Activated CD4-positive, alpha-beta memory T cell treated with anti-CD3 and anti-CD28 coated beads, Interleukin-2, amount 10 ng/mL, durations not matched to agents 7 days and 5 days (primary cell): ENCODE measurements at regions of chr6 and their contacts with region 1.

Region 1: DNA sequence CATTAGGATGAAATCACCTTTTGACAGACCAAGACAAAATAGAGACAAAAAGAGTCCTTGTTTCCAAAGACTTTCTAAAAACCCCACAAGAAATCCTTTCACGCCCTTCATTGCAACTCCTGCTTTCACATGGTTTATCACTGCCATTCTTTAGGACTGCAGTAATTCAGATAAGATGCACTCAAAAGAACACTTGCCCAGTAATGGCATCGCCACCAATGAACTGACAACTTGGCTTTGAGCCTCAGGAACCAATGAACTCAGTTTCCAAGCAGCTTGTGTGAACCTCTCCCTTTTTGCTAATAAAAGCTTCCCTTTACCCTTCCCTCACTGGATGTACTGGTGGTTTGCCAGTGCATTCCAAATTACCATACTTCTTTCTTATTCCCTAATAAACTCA is 21.8 kb downstream of the OSTM1 start:
- DNase-seq: no peak
- H3K4me3 Mint-ChIP-seq: no peak overlapping the region
- H3K27ac Mint-ChIP-seq: no peak overlapping the region
- H3K4me1 Mint-ChIP-seq: no peaks in the 10 kb centered on the region
- H3K27me3 Mint-ChIP-seq: no peaks in the 10 kb centered on the region

Region 2: DNA sequence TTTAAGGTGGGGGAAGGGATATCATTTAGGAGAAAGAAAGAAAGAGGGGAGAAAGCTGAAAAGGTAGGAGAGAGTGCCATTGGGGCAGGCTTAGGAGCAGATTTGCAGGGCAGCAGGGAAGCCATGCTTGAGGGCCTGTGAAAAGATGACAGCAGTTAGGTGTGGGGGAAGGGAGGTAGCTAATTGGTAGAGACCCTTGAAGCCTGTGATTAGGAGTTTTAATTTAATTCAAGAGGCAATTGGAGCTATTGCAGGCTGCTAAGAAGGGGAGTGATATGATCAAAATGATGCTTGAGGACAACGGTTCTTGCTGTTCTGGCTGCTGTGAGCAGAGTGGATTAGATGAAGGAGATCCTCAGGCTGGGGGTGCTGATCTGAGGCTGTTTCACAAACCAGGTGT is 70.2 kb before region 1 on chr6:
- CTCF ChIA-PET with region 1: interaction called, 15 read pairs
- POLR2A ChIA-PET with region 1: no interaction called
- DNase-seq: no peak
- H3K4me3 Mint-ChIP-seq: no peak overlapping the region
- H3K27ac Mint-ChIP-seq: no peak overlapping the region
- H3K4me1 Mint-ChIP-seq: peaks cover 2% of the 10 kb centered on the region
- H3K27me3 Mint-ChIP-seq: peaks cover 6% of the 10 kb centered on the region